PC-3 (cell line): ENCODE measurements at regions of chr3 and their contacts with region 1.

Region 1: DNA sequence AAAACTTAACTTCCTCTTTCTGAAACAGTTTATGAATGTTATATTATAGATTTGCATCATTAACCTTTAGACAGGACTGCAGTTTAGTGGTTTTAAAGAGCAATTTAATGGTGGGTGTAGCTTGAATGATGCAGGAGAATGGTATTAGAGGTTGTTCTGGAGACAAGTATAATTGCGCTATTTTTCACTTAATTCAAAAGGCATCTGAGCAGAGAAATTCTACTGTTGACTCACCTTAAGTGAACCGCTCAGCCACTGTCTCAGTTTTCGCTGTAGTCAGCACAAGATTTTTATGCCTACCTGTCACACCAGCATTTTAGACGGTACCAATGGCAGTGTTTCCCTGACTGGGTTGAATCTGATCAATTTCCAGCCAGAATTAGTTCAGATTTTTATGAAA is 348.8 kb upstream of the DCBLD2 start:
- DNase-seq: peak; percentile 75
- ATAC-seq: peak; percentile 68
- H3K4me3 ChIP-seq: no peak overlapping the region
- H3K27ac ChIP-seq: no peak overlapping the region
- H3K4me1 ChIP-seq: peaks cover 54% of the 10 kb centered on the region
- H3K27me3 ChIP-seq: no peaks in the 10 kb centered on the region
- CTCF ChIP-seq: no peak

Region 2: DNA sequence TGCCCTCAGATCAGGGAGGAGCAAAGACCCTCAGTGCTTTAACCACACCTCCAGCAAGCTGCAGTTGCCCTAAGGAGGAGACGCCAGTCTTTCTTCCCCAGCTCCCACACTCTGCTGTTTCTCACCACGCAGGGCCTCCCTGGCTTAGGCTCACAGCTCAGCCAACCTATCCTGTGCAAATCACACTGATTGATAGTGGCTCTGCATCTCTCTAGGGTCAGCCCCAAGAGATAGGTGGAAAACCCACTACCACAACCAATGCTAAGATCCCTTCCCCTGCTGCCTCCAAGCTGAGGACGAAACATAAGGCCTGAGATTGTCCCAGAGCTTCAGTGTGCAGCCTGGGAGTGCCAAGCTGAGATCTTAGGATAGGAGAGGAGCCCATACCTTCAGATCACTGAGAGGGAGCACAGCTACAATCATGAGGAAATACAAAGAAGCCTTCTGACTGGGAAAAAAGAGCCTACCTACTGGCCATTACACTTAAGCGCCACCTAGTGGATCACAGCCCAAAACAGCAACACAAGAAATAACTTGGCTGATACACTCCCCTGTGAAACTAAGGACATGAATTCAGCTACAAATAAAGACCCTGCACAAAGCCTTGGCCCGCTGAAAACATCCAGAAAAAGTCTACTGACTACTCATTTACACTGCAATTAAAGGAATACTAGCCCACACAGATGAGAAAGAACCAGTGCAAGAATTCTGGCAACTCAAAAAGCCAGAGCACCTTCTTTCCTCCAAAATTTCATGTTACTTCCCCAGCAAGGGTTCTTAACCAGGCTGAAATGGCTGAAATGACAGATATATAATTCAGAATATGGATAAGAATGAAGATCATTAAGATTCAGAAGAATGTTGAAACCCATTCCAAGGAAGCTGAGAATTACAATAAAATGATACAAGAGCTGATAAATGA is 77.3 kb before region 1 on chr3:
- CTCF ChIA-PET with region 1: no interaction called
- POLR2A ChIA-PET with region 1: no interaction called
- intact Hi-C with region 1: loop called (anchors 2 kb)
- DNase-seq: peak; percentile 84
- ATAC-seq: peak; percentile 79
- H3K4me3 ChIP-seq: no peak overlapping the region
- H3K27ac ChIP-seq: no peak overlapping the region
- H3K4me1 ChIP-seq: no peaks in the 10 kb centered on the region
- H3K27me3 ChIP-seq: no peaks in the 10 kb centered on the region
- CTCF ChIP-seq: peak; percentile 94

Region 3: DNA sequence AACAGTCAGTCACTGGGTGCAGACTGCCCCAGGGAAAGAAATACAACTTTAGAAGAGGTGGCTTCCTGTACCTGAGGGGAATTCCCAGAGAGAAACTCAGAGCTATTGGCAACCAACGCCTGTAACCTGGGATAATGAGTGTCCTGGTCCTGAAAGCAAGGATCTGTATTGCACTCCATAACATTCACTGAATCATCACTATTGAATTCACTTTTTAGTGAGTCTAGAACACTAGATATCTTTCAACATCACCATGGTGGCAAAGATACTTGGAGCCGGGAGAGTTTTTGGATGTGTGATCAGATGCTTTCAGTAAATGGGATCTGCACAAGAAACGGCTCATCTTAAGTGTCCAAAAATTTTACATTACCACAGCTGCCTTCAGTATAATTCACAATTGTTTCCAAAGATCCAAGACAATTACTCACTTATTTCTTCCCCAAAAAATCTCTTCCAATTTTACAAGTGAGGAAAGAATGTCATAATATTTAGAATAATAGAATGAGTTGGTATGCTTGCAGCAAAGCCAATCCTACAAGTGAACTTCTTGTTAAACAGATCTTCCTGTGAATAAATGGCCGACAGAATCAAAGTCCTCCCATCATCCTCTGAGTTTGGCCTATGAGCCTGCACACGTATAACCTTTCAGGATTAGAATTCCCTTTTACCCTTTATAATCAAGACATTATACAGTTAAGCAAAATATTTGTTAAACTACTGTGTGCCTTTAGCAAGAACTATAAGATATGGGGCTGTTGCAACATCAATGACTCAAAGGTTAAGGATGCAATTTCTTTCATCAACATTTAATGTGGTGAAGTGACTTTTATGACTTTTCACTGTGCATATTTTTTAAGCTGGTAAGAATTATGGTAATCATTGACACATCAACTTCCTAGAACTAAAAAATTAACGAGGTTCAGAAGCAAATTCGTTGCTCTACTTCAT is 144.8 kb after region 1 on chr3:
- CTCF ChIA-PET with region 1: no interaction called
- POLR2A ChIA-PET with region 1: no interaction called
- intact Hi-C with region 1: loop called (anchors 5 kb)
- DNase-seq: peak; percentile 86
- ATAC-seq: peak; percentile 73
- H3K4me3 ChIP-seq: no peak overlapping the region
- H3K27ac ChIP-seq: no peak overlapping the region
- H3K4me1 ChIP-seq: peaks cover 17% of the 10 kb centered on the region; the same call in 1 of the 2 replicates
- H3K27me3 ChIP-seq: no peaks in the 10 kb centered on the region
- CTCF ChIP-seq: no peak

Region 4: DNA sequence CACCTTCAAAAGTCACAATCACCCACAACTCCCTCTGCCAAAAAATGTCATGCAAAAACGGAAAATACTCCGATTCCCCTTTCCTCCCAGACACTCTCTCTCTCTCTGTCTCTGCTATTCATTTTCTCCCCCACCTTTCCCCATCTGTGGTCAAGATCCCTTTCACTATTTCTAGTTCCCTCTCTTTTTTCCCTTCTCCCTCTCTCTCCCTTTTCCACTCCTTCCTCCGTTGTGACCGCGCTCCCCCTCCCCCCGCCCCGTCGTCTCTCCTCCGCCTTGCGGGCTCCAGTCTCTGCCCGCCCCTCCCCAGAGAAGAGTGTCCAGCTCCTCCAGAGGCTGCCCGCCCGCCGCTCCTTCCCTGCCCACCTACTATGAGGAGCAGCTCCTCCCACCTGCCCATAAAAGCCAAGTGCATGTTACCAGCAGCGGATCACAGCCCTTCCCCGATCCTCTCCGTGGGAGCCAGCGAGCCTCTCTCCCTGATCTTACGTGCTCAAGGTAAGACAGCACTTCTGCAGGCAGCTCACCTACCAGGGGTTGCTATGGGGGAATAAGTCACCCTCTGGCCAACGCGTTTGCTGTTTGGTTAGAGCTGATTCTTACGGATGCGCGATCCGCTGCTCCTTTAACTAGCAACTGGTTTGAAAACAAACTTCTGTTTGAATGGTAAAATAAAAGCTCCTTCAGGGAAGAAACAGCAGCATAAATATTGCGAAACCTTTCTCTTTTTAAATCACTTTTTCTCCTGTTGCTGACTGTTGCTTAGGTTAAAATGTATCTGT is 388.1 kb after region 1 on chr3 and contains the start of gene COL8A1:
- CTCF ChIA-PET with region 1: no interaction called
- POLR2A ChIA-PET with region 1: no interaction called
- intact Hi-C with region 1: loop called (anchors 5 kb)
- DNase-seq: peak; percentile 76
- ATAC-seq: peak; percentile 63
- H3K4me3 ChIP-seq: peak within 1 kb of the TSS; percentile 72
- H3K27ac ChIP-seq: peak within 1 kb of the TSS; percentile 79
- H3K4me1 ChIP-seq: peaks cover 36% of the 10 kb centered on the region
- H3K27me3 ChIP-seq: no peaks in the 10 kb centered on the region
- CTCF ChIP-seq: no peak
- total RNA-seq, gene COL8A1: 2.4 and 3.8 TPM in 2 replicates